Activated B cell treated with CpG ODN at 0.5 μM for 24 hours (primary cell): ENCODE measurements at regions of chrX and their contacts with region 1.

Region 1: DNA sequence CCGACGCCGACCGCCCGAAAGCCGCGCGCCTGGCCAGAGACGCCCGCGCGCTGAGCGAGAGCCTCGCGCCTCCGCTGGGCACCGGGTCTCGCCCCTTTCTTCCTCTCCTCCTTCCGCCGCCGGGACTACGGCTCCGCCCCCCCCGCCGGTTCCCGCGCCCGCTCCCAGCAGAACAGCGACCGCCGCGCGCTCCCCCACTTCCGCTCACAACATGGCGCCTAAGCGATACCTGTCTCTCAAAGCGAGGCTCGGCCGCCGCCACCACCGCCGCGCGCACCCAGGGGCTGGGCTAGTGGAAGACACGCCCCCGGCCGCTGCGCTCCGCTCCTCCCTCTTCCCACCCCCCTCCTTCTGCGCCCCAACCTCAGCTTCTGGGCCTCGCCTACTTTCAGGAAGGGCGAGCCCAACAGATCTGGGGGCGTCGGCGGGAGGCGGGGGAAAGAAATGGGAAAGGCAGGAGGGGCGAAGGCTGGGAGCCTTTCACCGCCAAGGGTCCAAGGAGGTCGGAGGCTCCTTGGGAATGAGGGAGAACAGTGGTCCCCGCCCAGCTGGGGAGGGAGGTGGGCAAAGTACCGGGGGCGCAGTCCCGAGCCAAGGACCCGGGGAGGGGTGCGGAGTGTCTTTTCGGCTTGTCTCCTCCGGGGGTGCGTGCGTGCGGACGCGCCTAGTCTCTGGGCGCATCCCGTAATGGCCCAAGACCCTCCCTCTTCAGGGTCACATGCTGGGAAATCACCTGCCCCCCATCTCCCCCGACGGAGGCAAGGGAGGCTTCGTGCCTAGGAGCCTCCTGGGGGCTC is at the start of gene RPS6KA3:
- DNase-seq: peak; percentile 80
- ATAC-seq: peak; percentile 83
- H3K4me3 Mint-ChIP-seq: peak within 1 kb of the TSS; percentile 92
- H3K27ac Mint-ChIP-seq: peak within 1 kb of the TSS; percentile 90
- H3K4me1 Mint-ChIP-seq: peaks cover 22% of the 10 kb centered on the region
- H3K27me3 Mint-ChIP-seq: no peaks in the 10 kb centered on the region
- CTCF ChIP-seq: no peak
- total RNA-seq, gene RPS6KA3: 36.1 and 40.5 TPM in 2 replicates

Region 2: DNA sequence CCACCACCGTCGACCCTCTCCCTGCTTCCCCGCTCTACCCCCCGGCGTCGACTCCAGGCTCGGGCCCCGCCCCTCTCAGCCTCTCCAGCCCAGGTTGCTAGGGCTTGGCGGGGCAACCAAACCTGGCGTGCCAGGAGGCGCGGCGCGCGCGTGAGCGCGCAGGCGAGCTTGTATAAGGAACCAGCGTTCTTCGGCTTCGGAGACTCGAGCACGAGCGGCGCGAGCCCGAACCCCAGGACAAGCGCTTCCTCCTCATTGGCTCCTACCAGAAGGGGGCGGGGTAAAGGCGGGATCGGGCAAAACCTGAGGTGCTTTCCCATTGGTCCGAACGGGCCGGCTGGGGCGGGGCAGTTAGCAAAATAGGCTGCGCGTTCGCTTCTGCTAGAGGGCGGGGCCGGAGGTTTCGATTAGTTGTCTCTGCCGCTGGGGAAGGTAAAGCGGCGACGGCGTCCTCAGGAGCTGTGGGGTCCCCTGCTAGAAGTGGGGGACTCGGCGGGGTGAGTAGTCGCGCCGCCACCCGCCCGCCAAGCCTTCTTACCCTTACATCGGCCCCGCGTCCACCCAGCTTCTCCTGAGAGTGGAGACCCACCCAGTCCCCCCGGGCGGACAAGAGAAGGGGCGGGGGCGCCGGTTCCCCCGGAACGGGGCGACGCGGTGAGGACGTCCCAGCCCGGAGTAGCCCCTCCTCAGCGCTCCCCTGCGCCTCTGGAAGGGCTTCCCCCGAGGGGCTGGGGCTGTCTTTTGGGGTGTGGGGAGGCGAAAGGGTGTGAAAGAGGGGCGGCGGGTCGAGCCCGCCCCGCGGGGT is 1841.6 kb before region 1 on chrX and contains the start of gene CDKL5:
- CTCF ChIA-PET with region 1: no interaction called
- POLR2A ChIA-PET with region 1: no interaction called
- intact Hi-C with region 1: loop called (anchors 5 kb)
- DNase-seq: peak; percentile 82
- ATAC-seq: peak; percentile 93
- H3K4me3 Mint-ChIP-seq: peak within 1 kb of the TSS; percentile 86
- H3K27ac Mint-ChIP-seq: peak within 1 kb of the TSS; percentile 77
- H3K4me1 Mint-ChIP-seq: peaks cover 16% of the 10 kb centered on the region
- H3K27me3 Mint-ChIP-seq: no peaks in the 10 kb centered on the region
- CTCF ChIP-seq: no peak
- total RNA-seq, gene CDKL5: 3.7 and 3.8 TPM in 2 replicates

Region 3: GRCh38 chrX:20011608-20012007 is 255.4 kb before region 1 on chrX:
- CTCF ChIA-PET with region 1: no interaction called
- POLR2A ChIA-PET with region 1: no interaction called
- intact Hi-C with region 1: no loop called
- DNase-seq: no peak
- ATAC-seq: no peak
- H3K4me3 Mint-ChIP-seq: no peak overlapping the region
- H3K27ac Mint-ChIP-seq: no peak overlapping the region
- H3K4me1 Mint-ChIP-seq: peaks cover 11% of the 10 kb centered on the region
- H3K27me3 Mint-ChIP-seq: no peaks in the 10 kb centered on the region
- CTCF ChIP-seq: no peak

Region 4: DNA sequence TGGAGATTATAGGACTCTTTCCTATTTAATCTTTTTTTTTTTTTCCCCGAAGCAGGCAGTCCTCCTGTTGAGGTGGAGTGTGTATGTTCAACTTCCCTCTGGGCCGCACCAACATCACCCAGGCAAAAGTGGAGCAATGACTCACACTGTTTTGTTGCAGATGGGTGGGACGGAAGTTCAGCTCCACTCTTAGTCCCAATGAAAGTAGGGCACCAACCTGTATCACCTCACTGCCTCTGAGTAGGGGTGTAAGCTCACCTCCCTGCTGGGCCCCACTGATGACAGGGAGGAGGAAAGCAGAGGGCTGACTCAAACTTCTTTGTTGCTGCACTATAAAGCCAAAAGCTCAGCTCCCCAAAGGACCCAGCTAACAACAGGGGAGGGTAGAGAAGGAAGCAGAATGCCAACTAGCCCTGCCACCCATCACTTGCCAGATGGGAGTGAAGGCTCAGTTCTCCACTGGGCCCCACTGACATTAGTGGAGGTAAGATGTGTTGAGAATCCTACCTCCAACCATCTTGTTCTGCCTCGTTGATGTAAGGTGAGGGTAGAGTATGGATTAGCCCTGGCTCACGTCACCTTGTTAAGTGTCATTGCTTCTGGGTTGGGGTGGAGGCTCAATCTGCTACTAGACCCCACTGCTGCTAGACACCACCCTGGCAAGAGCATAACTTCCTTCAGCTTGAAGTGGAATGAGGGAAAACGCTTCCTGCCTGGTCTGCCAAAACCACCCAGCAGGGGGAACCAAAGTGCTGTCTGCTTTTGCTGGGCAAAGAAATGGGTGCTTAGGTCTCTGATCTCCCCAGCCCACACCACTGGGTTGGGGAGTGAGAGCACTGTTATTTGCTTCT is 14.4 kb before region 1 on chrX:
- CTCF ChIA-PET with region 1: no interaction called
- POLR2A ChIA-PET with region 1: interaction called, 9 read pairs
- intact Hi-C with region 1: loop called (anchors 2 kb)
- DNase-seq: peak; percentile 42
- ATAC-seq: peak; percentile 75
- H3K4me3 Mint-ChIP-seq: no peak overlapping the region
- H3K27ac Mint-ChIP-seq: no peak overlapping the region
- H3K4me1 Mint-ChIP-seq: peaks cover 45% of the 10 kb centered on the region
- H3K27me3 Mint-ChIP-seq: no peaks in the 10 kb centered on the region
- CTCF ChIP-seq: no peak

Region 5: GRCh38 chrX:20378291-20378920 is 111.4 kb after region 1 on chrX:
- CTCF ChIA-PET with region 1: no interaction called
- POLR2A ChIA-PET with region 1: interaction called, 13 read pairs
- intact Hi-C with region 1: loop called (anchors 2 kb)
- DNase-seq: no peak
- ATAC-seq: peak; percentile 28
- H3K4me3 Mint-ChIP-seq: no peak overlapping the region
- H3K27ac Mint-ChIP-seq: no peak overlapping the region
- H3K4me1 Mint-ChIP-seq: peaks cover 26% of the 10 kb centered on the region
- H3K27me3 Mint-ChIP-seq: no peaks in the 10 kb centered on the region
- CTCF ChIP-seq: no peak

Region 6: DNA sequence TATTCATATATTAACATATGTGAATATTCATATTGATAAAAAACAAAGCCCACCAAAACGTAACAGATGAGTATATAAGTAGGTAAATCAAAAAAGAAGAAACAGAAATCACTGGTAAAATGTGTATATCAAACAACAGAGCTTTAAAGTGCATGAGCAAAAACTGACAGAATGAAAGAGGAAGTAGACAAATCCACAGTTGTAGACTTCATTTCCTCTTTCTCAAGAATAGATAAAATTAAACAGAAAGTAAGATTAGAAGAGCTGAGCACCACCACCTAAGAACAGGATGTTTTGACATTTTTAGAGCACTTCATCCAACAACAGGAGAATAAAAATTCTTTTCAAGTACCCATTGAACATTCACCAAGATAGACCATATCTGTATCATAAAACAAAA is 1171.8 kb after region 1 on chrX:
- CTCF ChIA-PET with region 1: no interaction called
- POLR2A ChIA-PET with region 1: no interaction called
- intact Hi-C with region 1: loop called (anchors 10 kb)
- DNase-seq: no peak
- ATAC-seq: peak; percentile 88
- H3K4me3 Mint-ChIP-seq: peak overlapping the region; percentile 76
- H3K27ac Mint-ChIP-seq: peak overlapping the region; percentile 91
- H3K4me1 Mint-ChIP-seq: peaks cover 37% of the 10 kb centered on the region
- H3K27me3 Mint-ChIP-seq: no peaks in the 10 kb centered on the region
- CTCF ChIP-seq: no peak